Activated CD4-positive, alpha-beta memory T cell treated with anti-CD3 and anti-CD28 coated beads, Interleukin-2, amount 10 ng/mL, durations not matched to agents 7 days and 5 days (primary cell): ENCODE measurements at regions of chr2 and their contacts with region 1.

Region 1: GRCh38 chr2:112749755-112750559 is 14.5 kb downstream of the CKAP2L start:
- DNase-seq: peak; percentile 86
- H3K4me3 Mint-ChIP-seq: no peak overlapping the region
- H3K27ac Mint-ChIP-seq: peak overlapping the region; percentile 74
- H3K4me1 Mint-ChIP-seq: peaks cover 57% of the 10 kb centered on the region
- H3K27me3 Mint-ChIP-seq: no peaks in the 10 kb centered on the region

Region 2: GRCh38 chr2:112737542-112738232 is 12.3 kb before region 1 on chr2:
- CTCF ChIA-PET with region 1: interaction called, 18 read pairs
- POLR2A ChIA-PET with region 1: interaction called, 7 read pairs
- DNase-seq: no peak
- H3K4me3 Mint-ChIP-seq: no peak overlapping the region
- H3K27ac Mint-ChIP-seq: no peak overlapping the region
- H3K4me1 Mint-ChIP-seq: no peaks in the 10 kb centered on the region
- H3K27me3 Mint-ChIP-seq: no peaks in the 10 kb centered on the region

Region 3: GRCh38 chr2:112764071-112765044 is 14.4 kb after region 1 on chr2 and contains the start of gene CKAP2L:
- CTCF ChIA-PET with region 1: interaction called, 22 read pairs
- POLR2A ChIA-PET with region 1: interaction called, 17 read pairs
- DNase-seq: peak; percentile 99
- H3K4me3 Mint-ChIP-seq: peak within 1 kb of the TSS; percentile 89
- H3K27ac Mint-ChIP-seq: peak within 1 kb of the TSS; percentile 98
- H3K4me1 Mint-ChIP-seq: peaks cover 68% of the 10 kb centered on the region
- H3K27me3 Mint-ChIP-seq: no peaks in the 10 kb centered on the region
- total RNA-seq, gene CKAP2L: 63.3 to 66.3 TPM

Region 4: DNA sequence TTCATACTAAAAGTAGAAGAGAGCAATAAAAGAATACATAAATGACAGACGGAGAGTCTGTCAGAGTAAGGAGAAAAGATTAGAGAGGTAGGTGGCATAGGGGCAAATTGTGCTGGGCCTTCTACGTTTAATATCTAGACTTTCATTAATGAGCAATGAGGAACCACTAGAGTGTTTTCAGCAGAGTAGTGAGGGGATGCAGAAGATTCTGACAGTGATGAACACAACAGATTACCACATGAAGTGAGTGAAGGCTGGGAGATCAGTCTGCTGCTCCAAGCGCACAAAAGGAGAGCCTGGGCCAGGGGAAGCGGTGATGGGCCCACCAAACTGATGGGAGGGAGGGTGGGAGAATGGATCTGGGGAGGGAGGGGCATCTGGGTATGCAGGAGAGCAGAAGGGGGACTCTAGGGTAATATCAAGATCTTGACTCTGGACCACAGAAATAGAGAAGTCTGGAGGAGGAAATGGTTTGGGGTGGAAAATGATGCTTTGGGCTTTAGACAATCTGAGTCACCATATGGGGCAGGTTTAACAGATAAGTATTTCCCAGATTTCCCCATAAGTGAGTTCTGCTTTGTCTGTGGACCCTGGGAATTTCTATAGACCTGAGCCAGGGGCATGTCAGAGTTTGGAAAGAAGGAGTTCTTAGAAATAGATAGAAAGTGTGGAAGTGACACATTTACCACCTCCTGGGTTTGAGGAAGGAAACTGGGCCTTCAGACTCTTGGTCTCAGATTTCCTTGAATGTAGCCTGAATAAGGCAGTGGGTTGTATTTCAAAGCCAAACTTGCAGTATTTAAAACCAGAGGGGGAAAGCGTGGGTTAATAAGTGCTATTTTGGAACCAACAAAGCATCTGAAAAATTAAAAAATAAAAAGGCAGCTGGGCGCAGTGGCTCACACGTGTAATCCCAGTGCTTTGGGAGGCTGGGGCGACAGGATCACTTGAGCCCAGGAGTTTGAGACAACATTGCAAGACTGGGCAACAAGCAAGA is 49.3 kb after region 1 on chr2:
- CTCF ChIA-PET with region 1: no interaction called
- POLR2A ChIA-PET with region 1: no interaction called
- DNase-seq: no peak
- H3K4me3 Mint-ChIP-seq: no peak overlapping the region
- H3K27ac Mint-ChIP-seq: peak overlapping the region; percentile 50
- H3K4me1 Mint-ChIP-seq: peaks cover 60% of the 10 kb centered on the region
- H3K27me3 Mint-ChIP-seq: no peaks in the 10 kb centered on the region

Region 5: GRCh38 chr2:112884869-112885505 is 135.0 kb after region 1 on chr2:
- CTCF ChIA-PET with region 1: interaction called, 110 read pairs
- POLR2A ChIA-PET with region 1: interaction called, 16 read pairs
- DNase-seq: peak; percentile 82
- H3K4me3 Mint-ChIP-seq: no peak overlapping the region
- H3K27ac Mint-ChIP-seq: peak overlapping the region; percentile 60
- H3K4me1 Mint-ChIP-seq: peaks cover 46% of the 10 kb centered on the region
- H3K27me3 Mint-ChIP-seq: no peaks in the 10 kb centered on the region

Region 6: DNA sequence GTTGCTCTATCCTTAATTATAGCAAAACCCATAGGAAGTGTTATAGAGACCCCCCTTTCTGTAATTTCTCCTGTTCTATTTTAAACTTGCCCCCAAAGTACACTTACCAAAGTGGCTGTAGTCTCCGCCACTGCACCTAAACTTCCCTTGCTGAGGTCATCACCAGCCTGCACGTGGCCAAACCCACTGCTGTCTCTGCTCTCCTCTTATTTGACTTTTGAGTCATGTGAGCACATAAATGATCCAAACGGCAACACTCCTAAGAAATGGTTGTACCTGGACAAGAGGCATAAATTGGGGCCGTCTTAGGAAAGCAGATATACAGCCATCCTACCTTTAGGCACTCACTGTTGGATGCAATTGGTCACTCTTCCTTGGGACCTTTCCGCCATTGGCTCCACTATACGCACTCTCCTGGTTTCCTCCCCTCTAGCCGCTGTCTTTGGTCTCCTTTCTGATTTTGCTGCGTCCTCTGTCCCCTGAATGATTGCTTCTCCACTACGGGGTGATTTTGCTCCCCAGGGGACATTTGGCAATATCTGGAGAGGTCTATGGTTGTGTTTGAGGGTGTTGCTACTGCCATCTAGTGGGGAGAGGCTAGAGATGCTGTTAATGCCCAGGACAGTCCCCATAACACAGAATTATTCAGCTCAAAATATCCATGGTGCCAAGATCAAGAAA is 208.6 kb after region 1 on chr2:
- CTCF ChIA-PET with region 1: interaction called, 24 read pairs
- POLR2A ChIA-PET with region 1: interaction called, 4 read pairs
- DNase-seq: peak; percentile 46
- H3K4me3 Mint-ChIP-seq: no peak overlapping the region
- H3K27ac Mint-ChIP-seq: no peak overlapping the region
- H3K4me1 Mint-ChIP-seq: no peaks in the 10 kb centered on the region
- H3K27me3 Mint-ChIP-seq: peaks cover 4% of the 10 kb centered on the region

Region 7: DNA sequence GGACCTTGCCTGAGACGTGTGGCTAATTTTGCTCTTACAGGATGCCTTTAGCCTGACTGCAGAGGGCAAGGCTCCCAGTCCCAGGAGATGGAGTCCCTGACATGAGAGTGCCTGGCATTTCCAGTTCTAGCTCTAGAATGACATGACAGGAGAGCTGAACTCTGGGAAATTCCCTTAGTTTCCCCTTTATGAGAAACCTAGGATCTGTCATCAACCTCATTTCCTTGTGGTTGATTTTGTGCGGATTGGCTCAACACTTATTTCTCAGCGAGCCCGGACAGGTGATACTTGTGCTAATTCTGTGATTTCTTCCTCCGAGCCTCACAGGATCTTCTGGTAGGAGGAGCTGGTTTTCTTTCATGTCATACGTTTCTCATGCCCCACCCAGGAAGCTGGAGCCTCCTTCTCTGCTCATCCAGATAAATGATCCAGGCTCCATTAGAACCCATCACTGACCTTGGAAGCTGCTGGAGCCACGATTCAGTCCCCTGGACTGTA is 227.7 kb after region 1 on chr2 and contains the start of gene IL36G:
- CTCF ChIA-PET with region 1: no interaction called
- POLR2A ChIA-PET with region 1: no interaction called
- DNase-seq: no peak
- H3K4me3 Mint-ChIP-seq: no peak within 1 kb of the TSS
- H3K27ac Mint-ChIP-seq: no peak within 1 kb of the TSS
- H3K4me1 Mint-ChIP-seq: peaks cover 10% of the 10 kb centered on the region
- H3K27me3 Mint-ChIP-seq: peaks cover 11% of the 10 kb centered on the region
- total RNA-seq, gene IL36G: not detected